Activated naive CD4-positive, alpha-beta T cell treated with anti-CD3 and anti-CD28 coated beads for 36 hours (primary cell): ENCODE measurements at regions of chr1 and their contacts with region 1.

Region 1: DNA sequence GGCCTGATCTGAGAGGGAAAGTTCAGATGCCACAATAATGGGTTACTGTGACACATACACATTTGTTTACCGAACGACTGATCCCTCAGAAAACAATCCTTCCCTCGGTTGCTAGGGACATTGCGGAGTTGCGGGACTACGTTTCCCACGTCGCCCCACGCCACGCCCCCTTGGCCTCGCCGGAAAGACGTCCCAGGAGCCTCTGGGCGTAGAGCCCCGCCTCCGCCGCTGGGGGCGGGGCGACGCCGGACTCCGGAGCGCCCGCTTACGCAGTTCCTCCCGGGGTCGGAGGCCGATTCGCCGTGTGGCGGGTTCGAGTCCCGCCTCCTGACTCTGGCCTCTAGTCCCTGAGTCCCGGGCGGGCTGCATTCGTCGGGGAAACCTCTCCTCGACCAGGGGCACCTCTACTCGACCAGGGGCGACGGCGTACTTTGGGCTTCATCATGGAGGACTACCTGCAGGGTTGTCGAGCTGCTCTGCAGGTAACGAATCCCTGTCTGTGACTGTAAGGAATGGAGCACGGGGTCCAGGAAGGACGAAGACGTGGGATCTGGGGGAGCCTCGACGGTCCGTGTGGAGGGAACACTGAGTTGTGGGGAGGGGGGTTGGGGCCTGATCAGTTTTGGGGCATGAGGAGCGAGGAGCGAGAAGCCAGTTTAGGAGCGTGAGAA is at the start of gene PRUNE1:
- DNase-seq: peak; percentile 97
- H3K4me3 Mint-ChIP-seq: peak within 1 kb of the TSS; percentile 92
- H3K27ac Mint-ChIP-seq: peak within 1 kb of the TSS; percentile 99
- H3K4me1 Mint-ChIP-seq: peaks cover 56% of the 10 kb centered on the region
- H3K27me3 Mint-ChIP-seq: no peaks in the 10 kb centered on the region
- total RNA-seq, gene PRUNE1: 13.3 to 15.9 TPM

Region 2: DNA sequence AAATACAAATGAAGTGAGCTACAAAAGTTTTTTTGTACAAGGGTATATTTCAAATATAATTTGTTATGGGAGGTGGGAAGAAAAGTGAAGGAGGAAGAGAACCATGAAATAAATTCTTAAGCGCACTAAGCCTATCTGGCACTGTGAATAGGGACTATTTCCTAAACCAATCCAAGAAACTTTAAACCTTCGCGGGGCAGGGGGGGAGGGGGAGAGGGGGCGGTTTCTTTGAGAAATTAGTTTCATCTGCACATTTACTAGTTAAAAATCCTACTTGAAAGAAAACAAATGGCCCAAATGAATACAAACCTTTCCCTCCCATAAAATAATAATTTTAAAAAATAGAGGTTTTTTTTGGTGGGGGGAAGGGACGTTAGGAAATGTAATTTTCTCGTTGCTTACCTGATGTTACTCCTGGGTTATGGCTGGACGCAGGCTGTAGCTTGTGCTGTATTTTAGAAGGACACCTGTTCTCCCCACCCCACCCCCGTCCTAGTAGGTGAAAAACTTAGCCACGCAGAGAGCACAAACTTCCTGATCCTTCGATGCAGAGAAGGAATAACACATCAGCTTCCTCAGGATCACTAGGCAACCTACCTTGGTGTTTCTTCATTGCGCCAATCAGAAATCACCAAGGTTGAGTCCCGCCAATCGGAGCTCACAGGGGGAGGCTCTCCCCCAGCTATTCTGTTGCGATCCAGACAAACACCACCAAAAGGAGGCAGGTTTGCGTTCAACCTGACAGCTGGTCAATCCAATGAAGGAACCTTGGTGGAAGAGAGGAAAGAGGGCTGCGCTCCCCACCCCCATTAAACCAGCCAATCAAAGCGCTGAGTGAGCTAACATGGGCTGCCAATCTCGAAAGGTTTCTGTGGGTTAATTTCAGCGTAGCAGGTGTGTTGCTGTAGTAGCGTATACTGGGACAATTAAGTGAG is 311.5 kb before region 1 on chr1 and contains the start of gene GOLPH3L:
- CTCF ChIA-PET with region 1: no interaction called
- intact Hi-C with region 1: loop called (anchors 2 kb)
- DNase-seq: peak; percentile 97
- H3K4me3 Mint-ChIP-seq: peak within 1 kb of the TSS; percentile 92
- H3K27ac Mint-ChIP-seq: peak within 1 kb of the TSS; percentile 82
- H3K4me1 Mint-ChIP-seq: peaks cover 23% of the 10 kb centered on the region
- H3K27me3 Mint-ChIP-seq: peaks cover 2% of the 10 kb centered on the region
- total RNA-seq, gene GOLPH3L: 17.1 to 18.2 TPM

Region 3: DNA sequence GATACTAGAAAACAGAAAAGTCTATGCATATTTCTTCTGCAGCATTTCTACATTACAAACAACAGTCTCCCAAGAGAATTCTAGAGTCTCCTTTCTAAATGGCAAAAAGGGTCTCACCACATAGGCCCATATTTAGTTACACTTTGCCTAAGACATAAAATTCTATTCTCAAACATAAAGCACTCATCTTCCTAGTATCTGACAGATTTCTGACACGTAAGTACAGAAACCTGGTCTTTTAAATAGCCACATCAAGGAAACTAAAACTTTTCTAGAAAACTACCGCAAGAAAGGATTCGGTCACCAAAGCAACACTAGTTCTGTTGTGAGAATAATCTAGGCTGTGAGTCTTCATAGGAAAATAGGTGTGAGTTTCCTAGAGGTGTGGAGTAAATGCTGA is 166.7 kb before region 1 on chr1:
- CTCF ChIA-PET with region 1: no interaction called
- intact Hi-C with region 1: loop called (anchors 10 kb)
- DNase-seq: no peak
- H3K4me3 Mint-ChIP-seq: no peak overlapping the region
- H3K27ac Mint-ChIP-seq: no peak overlapping the region
- H3K4me1 Mint-ChIP-seq: peaks cover 35% of the 10 kb centered on the region
- H3K27me3 Mint-ChIP-seq: no peaks in the 10 kb centered on the region

Region 4: DNA sequence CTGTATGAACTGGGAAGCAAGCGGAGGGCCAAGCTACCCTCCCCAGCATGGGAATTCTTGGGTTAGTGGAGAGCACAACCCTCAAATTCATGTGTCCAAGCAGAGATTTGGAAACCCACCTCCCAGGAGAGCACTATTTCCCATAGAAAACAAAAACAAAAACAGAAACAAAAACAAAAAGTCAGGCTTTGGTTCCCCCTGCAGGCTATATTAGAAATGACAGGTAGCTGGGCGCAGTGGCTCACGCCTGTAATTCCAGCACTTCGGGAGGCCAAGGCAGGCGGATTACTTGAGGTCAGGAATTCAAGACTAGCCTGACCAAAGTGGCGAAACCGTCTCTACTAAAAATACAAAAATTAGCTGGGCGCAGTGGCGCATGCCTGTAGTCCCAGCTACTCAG is 12.4 kb before region 1 on chr1:
- CTCF ChIA-PET with region 1: interaction called, 54 read pairs
- intact Hi-C with region 1: no loop called
- DNase-seq: peak; percentile 36
- H3K4me3 Mint-ChIP-seq: no peak overlapping the region
- H3K27ac Mint-ChIP-seq: peak overlapping the region; percentile 41
- H3K4me1 Mint-ChIP-seq: peaks cover 25% of the 10 kb centered on the region
- H3K27me3 Mint-ChIP-seq: no peaks in the 10 kb centered on the region

Region 5: DNA sequence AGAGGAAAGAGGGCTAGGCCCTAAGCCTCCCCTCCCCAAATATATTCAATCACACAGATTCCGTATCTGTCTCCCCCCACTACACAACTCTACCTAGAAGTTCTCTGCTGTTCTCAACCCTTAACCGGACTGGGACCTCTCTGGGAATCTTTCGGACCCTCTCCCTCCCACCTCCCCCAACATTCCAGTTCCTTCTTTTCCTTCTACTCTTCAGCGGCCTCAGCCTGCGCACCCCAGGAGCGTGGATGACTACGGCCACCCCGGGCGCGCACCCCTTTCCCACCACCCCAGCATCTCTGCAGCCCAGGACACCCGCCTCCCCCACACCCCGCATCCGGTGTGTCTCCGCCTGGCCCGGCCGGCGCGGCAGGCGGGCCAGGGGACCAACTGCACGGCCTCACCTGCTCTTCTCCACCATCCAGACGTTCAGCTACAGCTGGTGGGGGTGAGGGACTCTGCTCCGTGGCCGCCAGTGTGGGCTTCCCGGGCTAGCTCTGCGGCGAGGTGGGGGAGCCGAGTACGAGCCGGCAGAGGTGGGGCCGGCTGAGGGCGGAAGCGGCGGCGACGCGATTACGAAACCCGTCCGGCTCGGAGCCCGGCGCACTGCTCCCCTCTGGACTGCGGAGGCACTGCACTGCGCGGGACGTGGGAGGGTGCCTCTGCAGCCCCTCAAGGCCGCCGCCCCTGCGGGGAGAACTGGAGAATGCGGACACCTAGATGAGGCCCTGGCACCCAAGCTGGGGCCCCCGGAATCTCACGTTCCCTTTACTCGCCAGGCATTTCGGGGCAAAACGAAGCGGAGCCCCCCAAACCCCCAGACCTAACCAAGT is 51.0 kb after region 1 on chr1 and contains the start of gene CDC42SE1:
- CTCF ChIA-PET with region 1: interaction called, 6 read pairs
- intact Hi-C with region 1: loop called (anchors 1 kb)
- DNase-seq: peak; percentile 86
- H3K4me3 Mint-ChIP-seq: peak within 1 kb of the TSS; percentile 86
- H3K27ac Mint-ChIP-seq: peak within 1 kb of the TSS; percentile 98
- H3K4me1 Mint-ChIP-seq: peaks cover 53% of the 10 kb centered on the region
- H3K27me3 Mint-ChIP-seq: no peaks in the 10 kb centered on the region
- total RNA-seq, gene CDC42SE1: 98.1 to 99.0 TPM

Region 6: GRCh38 chr1:151156515-151156819 is 148.1 kb after region 1 on chr1 and contains the start of gene TNFAIP8L2:
- CTCF ChIA-PET with region 1: no interaction called
- intact Hi-C with region 1: loop called (anchors 1 kb)
- DNase-seq: peak; percentile 93
- H3K4me3 Mint-ChIP-seq: peak within 1 kb of the TSS; percentile 97
- H3K27ac Mint-ChIP-seq: peak within 1 kb of the TSS; percentile 98
- H3K4me1 Mint-ChIP-seq: peaks cover 40% of the 10 kb centered on the region
- H3K27me3 Mint-ChIP-seq: no peaks in the 10 kb centered on the region
- total RNA-seq, gene TNFAIP8L2: 9.6 to 10.5 TPM